ENCODE measurements at regions of chr5 and their contacts with region 1.

Region 1: GRCh38 chr5:86617756-86618576 is at the start of gene COX7C:
- DNase-seq: peak; percentile 67 to 97 (median 96)
- ATAC-seq: peak; percentile 97
- H3K4me3 ChIP-seq: peak within 1 kb of the TSS; percentile 95
- H3K4me3 Mint-ChIP-seq: peak within 1 kb of the TSS; percentile 96 to 100 (median 100)
- H3K27ac ChIP-seq: peak within 1 kb of the TSS; percentile 96
- H3K27ac Mint-ChIP-seq: peak within 1 kb of the TSS; percentile 98 to 100 (median 100)
- H3K4me1 ChIP-seq: peaks cover 7 to 12% of the 10 kb centered on the region in 2 donors
- H3K4me1 Mint-ChIP-seq: peaks cover 5 to 46% (median 32%) of the 10 kb centered on the region in 7 donors
- H3K27me3 ChIP-seq: no peaks in the 10 kb centered on the region
- H3K27me3 Mint-ChIP-seq: peaks cover 8 to 14% (median 9%) of the 10 kb centered on the region in 5 donors
- total RNA-seq, gene COX7C: 393 to 571 (median 547) TPM

Region 2: DNA sequence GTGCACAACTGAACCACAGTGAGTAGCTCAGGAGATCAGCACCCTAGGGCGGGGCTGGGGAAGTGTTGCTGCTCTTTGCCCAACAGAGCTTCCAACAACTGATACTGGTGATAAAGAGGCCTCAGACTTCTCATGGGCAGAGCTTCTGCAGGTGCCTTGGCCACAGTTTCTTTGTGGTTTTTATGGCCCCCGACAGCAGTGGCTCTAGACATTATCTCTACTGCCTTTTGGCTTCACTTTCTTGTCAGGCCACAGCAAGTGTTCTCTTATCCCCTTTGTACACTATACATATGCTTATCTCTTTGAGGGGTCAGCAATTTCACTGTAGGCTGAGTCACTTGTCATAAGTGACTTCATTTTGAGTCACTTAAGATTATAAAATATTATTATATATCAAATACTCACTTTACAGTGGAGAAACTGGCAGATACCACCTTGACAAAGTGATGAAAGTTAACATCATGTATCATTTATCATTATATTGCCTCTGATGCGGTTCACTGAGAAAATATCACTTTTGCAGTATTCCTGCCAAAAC is 91.1 kb before region 1 on chr5:
- CTCF ChIA-PET with region 1: no interaction called
- POLR2A ChIA-PET with region 1: no interaction called
- intact Hi-C with region 1: no loop called
- DNase-seq: no peak
- ATAC-seq: peak; percentile 46
- H3K4me3 ChIP-seq: no peak overlapping the region
- H3K4me3 Mint-ChIP-seq: no peak overlapping the region
- H3K27ac ChIP-seq: no peak overlapping the region
- H3K27ac Mint-ChIP-seq: no peak overlapping the region
- H3K4me1 ChIP-seq: no peaks in the 10 kb centered on the region
- H3K4me1 Mint-ChIP-seq: no peaks in the 10 kb centered on the region
- H3K27me3 ChIP-seq: no peaks in the 10 kb centered on the region
- H3K27me3 Mint-ChIP-seq: peaks cover 0 to 14% (median 7%) of the 10 kb centered on the region in 5 donors

Region 3: DNA sequence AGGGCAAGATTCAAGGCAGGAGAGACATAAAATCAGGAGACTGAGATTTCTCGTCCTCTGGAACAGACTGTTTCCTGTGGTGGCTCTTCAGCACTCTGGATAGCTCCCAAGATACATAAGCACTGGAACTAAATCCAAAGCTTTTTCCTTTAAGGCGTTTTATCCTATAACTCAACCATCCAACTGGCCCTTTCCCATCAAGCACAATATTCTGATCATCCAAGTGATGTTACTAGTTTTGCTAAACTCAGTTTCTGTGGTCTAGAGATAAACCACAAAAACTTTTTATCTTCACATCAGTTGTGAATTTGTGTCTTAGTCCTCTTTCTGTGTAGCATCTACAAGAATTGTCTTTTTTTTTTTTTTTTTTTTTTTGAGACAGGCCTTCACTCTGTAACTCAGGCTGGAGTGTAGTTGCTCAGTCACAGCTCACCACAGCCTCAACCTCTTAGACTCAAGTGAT is 299.2 kb after region 1 on chr5:
- CTCF ChIA-PET with region 1: no interaction called
- POLR2A ChIA-PET with region 1: no interaction called
- intact Hi-C with region 1: loop called in 1 of 2 experiments (anchors 1 kb)
- DNase-seq: peak in 1 of 9 donors; percentile 1
- ATAC-seq: no peak
- H3K4me3 ChIP-seq: no peak overlapping the region
- H3K4me3 Mint-ChIP-seq: peak overlapping the region in 1 of 10 donors; percentile 54
- H3K27ac ChIP-seq: no peak overlapping the region
- H3K27ac Mint-ChIP-seq: peak overlapping the region in 1 of 9 donors; percentile 32
- H3K4me1 ChIP-seq: no peaks in the 10 kb centered on the region
- H3K4me1 Mint-ChIP-seq: peaks cover 0 to 17% (median 0%) of the 10 kb centered on the region in 7 donors
- H3K27me3 ChIP-seq: no peaks in the 10 kb centered on the region
- H3K27me3 Mint-ChIP-seq: peaks cover 0 to 21% (median 7%) of the 10 kb centered on the region in 5 donors

Measured in naive thymus-derived CD4-positive, alpha-beta T cell (primary cell).